ENCODE measurements at regions of chr11 and their contacts with region 1.

Region 1: DNA sequence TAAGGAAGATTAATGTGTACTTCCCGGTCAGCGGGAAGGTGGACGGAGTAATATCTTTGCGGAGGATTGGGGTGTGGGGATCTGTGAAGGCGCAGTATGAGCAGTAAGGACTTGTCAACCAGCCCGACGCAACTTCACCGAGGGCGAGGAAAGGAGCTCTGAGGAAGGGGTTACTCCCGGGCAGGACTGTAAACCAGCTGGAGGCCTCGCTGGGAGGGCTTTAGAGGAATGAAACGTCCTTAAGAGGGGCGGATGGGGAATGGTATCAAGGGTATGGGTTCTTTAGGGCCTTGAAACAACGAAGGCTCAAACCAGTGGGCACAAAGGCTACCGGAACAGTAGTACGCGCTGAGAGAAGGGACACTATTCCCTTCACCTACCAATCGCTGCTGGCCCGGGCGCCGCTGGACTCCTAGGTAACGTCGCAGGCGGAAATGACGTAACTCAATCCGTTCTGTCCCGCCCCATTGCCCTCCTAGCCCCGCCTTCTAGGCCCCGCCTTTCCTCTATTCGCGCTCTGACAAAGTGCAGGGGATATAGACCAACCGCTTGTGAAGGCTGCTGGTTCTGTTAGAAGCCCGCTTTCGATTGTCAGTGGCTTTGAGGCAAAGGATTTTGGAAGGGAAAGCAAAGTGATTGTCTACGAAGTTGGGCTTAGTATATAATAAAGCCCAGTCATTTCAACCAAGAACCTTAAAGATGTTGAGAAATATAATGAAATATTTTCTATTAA is at the start of gene C11orf65:
- DNase-seq: peak; percentile 93
- ATAC-seq: peak; percentile 99
- H3K4me3 Mint-ChIP-seq: peak within 1 kb of the TSS; percentile 95
- H3K27ac Mint-ChIP-seq: peak within 1 kb of the TSS; percentile 99
- H3K4me1 Mint-ChIP-seq: peaks cover 8% of the 10 kb centered on the region
- H3K27me3 Mint-ChIP-seq: no peaks in the 10 kb centered on the region
- total RNA-seq, gene C11orf65: 0.57 to 0.80 TPM

Region 2: GRCh38 chr11:108497317-108498045 is 30.2 kb after region 1 on chr11:
- POLR2A ChIA-PET with region 1: interaction called, 14 read pairs
- DNase-seq: peak; percentile 71
- ATAC-seq: peak; percentile 83
- H3K4me3 Mint-ChIP-seq: peak overlapping the region; percentile 95
- H3K27ac Mint-ChIP-seq: peak overlapping the region; percentile 98
- H3K4me1 Mint-ChIP-seq: peaks cover 18% of the 10 kb centered on the region
- H3K27me3 Mint-ChIP-seq: no peaks in the 10 kb centered on the region